ENCODE measurements at regions of chr22 and their contacts with region 1.

Region 1: GRCh38 chr22:20916983-20917810 is at the start of gene CRKL:
- DNase-seq: peak; percentile 94 to 96 (median 96)
- H3K4me3 ChIP-seq: peak within 1 kb of the TSS; percentile 88 to 93
- H3K4me3 Mint-ChIP-seq: peak within 1 kb of the TSS; percentile 88 to 99 (median 98)
- H3K27ac ChIP-seq: peak within 1 kb of the TSS; percentile 88
- H3K27ac Mint-ChIP-seq: peak within 1 kb of the TSS; percentile 92 to 97 (median 96)
- H3K4me1 ChIP-seq: peaks cover 40% of the 10 kb centered on the region
- H3K4me1 Mint-ChIP-seq: peaks cover 22 to 53% (median 36%) of the 10 kb centered on the region in 4 donors
- H3K27me3 ChIP-seq: no peaks in the 10 kb centered on the region
- H3K27me3 Mint-ChIP-seq: no peaks in the 10 kb centered on the region
- total RNA-seq, gene CRKL: 85.1 to 86.5 TPM

Region 2: DNA sequence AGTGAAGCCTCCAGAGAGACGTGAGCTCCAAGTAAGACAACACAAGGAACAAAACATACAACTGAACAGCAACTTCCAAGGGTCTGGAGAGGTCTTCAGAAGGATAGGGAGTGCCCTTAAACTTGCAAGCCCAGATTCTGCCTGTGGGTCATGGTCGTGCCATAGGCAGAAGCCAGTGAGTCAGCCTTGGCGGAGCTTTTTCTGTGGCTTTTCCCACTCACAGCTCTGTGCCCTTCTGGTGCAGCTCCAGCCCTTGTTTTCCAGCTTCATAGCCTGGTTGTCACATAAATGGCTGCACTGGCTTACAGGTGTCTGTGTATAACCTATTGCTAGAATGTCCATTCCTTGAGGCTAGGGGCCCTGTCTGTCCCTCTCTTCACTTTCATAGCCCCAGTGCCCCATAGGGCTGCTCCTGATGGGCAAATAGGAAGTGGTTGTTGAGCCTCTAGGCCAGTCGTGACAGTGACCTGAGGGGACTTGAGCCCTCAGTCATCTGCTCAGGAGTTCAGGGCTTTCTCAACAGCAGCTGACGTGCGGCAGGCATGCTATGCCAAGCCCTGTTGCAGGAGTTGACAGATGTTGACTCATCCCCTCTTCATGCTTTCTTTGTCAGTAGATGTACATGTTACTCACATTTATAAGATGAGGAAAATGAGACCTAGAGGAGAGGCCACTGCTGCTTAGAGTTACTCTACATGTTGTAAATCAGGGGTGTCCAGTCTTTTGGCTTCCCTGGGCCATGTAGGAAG is 402.4 kb before region 1 on chr22:
- CTCF ChIA-PET with region 1: no interaction called
- POLR2A ChIA-PET with region 1: no interaction called
- intact Hi-C with region 1: no loop called
- DNase-seq: no peak
- H3K4me3 ChIP-seq: no peak overlapping the region
- H3K4me3 Mint-ChIP-seq: peak overlapping the region in 3 of 8 donors; percentile 4 to 68 (median 20)
- H3K27ac ChIP-seq: no peak overlapping the region
- H3K27ac Mint-ChIP-seq: peak overlapping the region in 6 of 7 donors; percentile 19 to 89 (median 54)
- H3K4me1 ChIP-seq: peaks cover 82% of the 10 kb centered on the region
- H3K4me1 Mint-ChIP-seq: peaks cover 54 to 86% (median 70%) of the 10 kb centered on the region in 4 donors
- H3K27me3 ChIP-seq: no peaks in the 10 kb centered on the region
- H3K27me3 Mint-ChIP-seq: no peaks in the 10 kb centered on the region

Region 3: GRCh38 chr22:20858615-20859416 is 58.4 kb before region 1 on chr22 and contains the starts of genes PI4KA and SNAP29:
- CTCF ChIA-PET with region 1: no interaction called
- POLR2A ChIA-PET with region 1: interaction called, 3 read pairs
- intact Hi-C with region 1: loop called (anchors 1 kb)
- DNase-seq: peak; percentile 97 to 98 (median 98)
- H3K4me3 ChIP-seq: peak within 1 kb of the TSS; percentile 19 to 80
- H3K4me3 Mint-ChIP-seq: peak within 1 kb of the TSS; percentile 85 to 95 (median 88)
- H3K27ac ChIP-seq: peak within 1 kb of the TSS; percentile 79
- H3K27ac Mint-ChIP-seq: peak within 1 kb of the TSS; percentile 85 to 94 (median 92)
- H3K4me1 ChIP-seq: peaks cover 63% of the 10 kb centered on the region
- H3K4me1 Mint-ChIP-seq: peaks cover 33 to 80% (median 61%) of the 10 kb centered on the region in 4 donors
- H3K27me3 ChIP-seq: no peaks in the 10 kb centered on the region
- H3K27me3 Mint-ChIP-seq: no peaks in the 10 kb centered on the region
- total RNA-seq, gene PI4KA: 142 to 145 TPM
- total RNA-seq, gene SNAP29: 24.4 to 26.1 TPM

Measured in CD4-positive, alpha-beta memory T cell (primary cell).